ENCODE measurements at regions of chr5 and their contacts with region 1.

Region 1: DNA sequence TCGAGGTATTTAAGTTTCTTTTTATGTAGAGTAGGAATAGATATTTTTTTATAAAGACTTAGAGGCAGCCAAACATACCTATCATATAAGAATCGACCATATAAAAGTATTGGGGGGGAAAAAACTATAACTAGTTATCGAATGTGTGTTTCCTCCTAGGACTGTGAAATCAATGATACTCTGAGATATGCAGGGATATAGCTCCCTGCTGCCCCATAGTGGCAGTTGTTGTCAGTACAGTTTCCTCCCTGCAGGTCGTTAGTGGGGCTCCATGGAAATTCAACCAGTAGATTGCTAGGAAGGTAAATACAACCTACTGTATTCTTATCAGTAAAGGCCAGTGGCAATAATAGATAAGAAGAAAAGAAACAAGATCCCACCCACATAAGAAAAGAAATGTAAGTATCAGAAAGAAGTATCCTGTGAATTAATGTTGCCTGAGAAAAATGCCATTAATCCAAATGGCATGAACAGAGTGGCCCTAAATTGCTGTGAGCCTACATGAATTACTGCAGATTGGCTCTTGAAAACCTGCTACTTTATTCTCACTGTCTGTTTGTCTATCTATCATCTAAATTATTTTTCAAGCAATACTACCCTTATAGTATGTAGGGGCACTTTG is 136.9 kb upstream of the FBN2 start:
- DNase-seq: peak; percentile 53 to 66
- H3K4me3 ChIP-seq: no peak overlapping the region
- H3K4me3 Mint-ChIP-seq: no peak overlapping the region
- H3K27ac Mint-ChIP-seq: no peak overlapping the region
- H3K4me1 ChIP-seq: no peaks in the 10 kb centered on the region
- H3K4me1 Mint-ChIP-seq: no peaks in the 10 kb centered on the region
- H3K27me3 ChIP-seq: no peaks in the 10 kb centered on the region
- H3K27me3 Mint-ChIP-seq: no peaks in the 10 kb centered on the region
- CTCF ChIP-seq: peak; percentile 58 to 68

Region 2: GRCh38 chr5:128498844-128499455 is 176.0 kb before region 1 on chr5:
- CTCF ChIA-PET with region 1: no interaction called
- POLR2A ChIA-PET with region 1: no interaction called
- intact Hi-C with region 1: loop called (anchors 5 kb)
- DNase-seq: peak in 1 of 2 experiments; percentile 35
- H3K4me3 ChIP-seq: no peak overlapping the region
- H3K4me3 Mint-ChIP-seq: no peak overlapping the region
- H3K27ac Mint-ChIP-seq: no peak overlapping the region
- H3K4me1 ChIP-seq: no peaks in the 10 kb centered on the region
- H3K4me1 Mint-ChIP-seq: no peaks in the 10 kb centered on the region
- H3K27me3 ChIP-seq: no peaks in the 10 kb centered on the region
- H3K27me3 Mint-ChIP-seq: no peaks in the 10 kb centered on the region
- CTCF ChIP-seq: peak; percentile 51 to 64